Activated T-helper 1 cell treated with anti-CD3 and anti-CD28 coated beads, Interleukin-12 subunit alpha, Interleukin-12 subunit beta, Interleukin-2, Interleukin-4 antibody, amounts not matched to agents 30 ng/mL and 10 ng/mL and 1 ng/mL, durations not matched to agents 14 hours and 24 hours and 36 hours (primary cell): ENCODE measurements at regions of chr20 and their contacts with region 1.

Region 1: GRCh38 chr20:57619051-57619834 is 983 bp downstream of the ZBP1 start:
- DNase-seq: peak; percentile 71
- H3K4me3 Mint-ChIP-seq: peak overlapping the region; percentile 72
- H3K27ac Mint-ChIP-seq: peak overlapping the region; percentile 86
- H3K4me1 Mint-ChIP-seq: peaks cover 51% of the 10 kb centered on the region
- H3K27me3 Mint-ChIP-seq: peaks cover 17% of the 10 kb centered on the region

Region 2: DNA sequence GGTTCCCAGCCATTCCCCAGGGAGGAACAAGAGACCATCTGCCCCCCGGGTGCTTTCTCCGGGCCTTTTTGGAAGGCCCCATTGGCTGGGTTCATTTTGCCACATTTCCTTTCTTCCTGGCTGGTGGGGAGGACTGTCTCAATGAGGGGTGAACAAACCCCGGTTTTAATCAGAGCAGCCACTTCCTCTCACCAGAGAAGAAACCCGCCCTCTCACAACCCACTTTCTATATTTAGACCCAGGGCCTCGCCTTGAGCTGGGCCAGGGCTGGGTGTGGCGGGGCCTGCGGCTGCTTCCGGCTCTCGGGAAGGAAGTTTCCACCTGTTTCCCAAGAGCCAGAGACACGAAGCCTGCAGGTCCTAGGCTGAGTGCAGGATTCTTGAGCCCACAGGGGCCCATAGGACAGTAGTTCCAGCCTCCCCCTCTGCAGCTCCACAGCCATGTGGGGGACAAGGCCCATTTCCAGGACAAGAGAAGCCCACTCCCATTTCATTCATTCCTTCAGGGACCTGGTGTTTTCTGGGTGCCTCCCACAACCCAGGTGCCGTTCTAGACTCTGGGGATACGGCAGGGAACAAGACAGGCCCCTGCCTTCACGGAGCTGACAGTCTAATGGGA is 186.3 kb before region 1 on chr20:
- intact Hi-C with region 1: loop called (anchors 1 kb)
- DNase-seq: peak; percentile 72
- H3K4me3 Mint-ChIP-seq: peak overlapping the region; percentile 37
- H3K27ac Mint-ChIP-seq: peak overlapping the region; percentile 79
- H3K4me1 Mint-ChIP-seq: peaks cover 49% of the 10 kb centered on the region
- H3K27me3 Mint-ChIP-seq: peaks cover 3% of the 10 kb centered on the region

Region 3: GRCh38 chr20:57698117-57698866 is 79.0 kb after region 1 on chr20:
- intact Hi-C with region 1: loop called (anchors 1 kb)
- DNase-seq: peak; percentile 8
- H3K4me3 Mint-ChIP-seq: peak overlapping the region; percentile 35
- H3K27ac Mint-ChIP-seq: no peak overlapping the region
- H3K4me1 Mint-ChIP-seq: peaks cover 19% of the 10 kb centered on the region
- H3K27me3 Mint-ChIP-seq: peaks cover 12% of the 10 kb centered on the region

Region 4: DNA sequence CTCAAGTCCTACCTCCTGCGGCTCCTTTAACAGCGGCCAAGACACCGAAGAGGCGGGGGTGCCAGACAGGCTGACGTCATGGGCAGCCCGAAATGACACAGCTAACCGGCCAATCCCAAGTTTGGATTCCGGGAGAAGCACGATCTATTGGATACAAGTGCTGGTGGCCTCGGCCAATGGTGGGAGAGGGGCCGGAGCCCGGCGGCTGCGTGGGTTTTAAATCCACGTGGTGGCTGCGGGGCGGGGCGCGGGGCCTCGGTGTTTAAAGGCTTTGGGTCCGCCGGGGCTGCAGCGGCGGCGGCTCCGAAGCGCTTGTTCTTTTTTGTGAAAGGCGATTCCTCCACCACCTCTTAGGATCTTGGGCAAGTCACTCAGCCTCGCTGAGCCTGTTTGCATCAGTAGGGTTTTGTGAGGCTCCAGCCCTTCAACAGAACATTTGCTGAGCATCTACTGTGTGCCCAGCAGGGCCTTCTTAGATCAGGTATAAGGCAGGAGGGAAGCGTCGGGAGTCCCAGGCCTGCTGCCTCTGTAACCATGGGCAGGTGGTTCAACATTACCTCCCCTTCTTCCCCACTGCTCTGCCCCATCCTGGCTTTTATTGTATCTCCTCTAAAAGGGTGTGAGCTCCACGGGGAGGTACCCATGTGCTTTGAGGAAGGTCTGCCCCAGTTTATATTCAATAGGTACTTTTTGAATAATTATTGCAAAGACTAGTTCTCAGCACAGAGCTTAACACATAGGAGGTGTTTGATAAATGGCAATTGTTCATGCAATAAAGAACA is 99.4 kb after region 1 on chr20:
- intact Hi-C with region 1: loop called (anchors 1 kb)
- DNase-seq: peak; percentile 78
- H3K4me3 Mint-ChIP-seq: peak overlapping the region; percentile 22
- H3K27ac Mint-ChIP-seq: no peak overlapping the region
- H3K4me1 Mint-ChIP-seq: no peaks in the 10 kb centered on the region
- H3K27me3 Mint-ChIP-seq: peaks cover 23% of the 10 kb centered on the region

Region 5: GRCh38 chr20:58692594-58693226 is 1073.5 kb after region 1 on chr20 and contains the start of gene NPEPL1:
- intact Hi-C with region 1: no loop called
- DNase-seq: peak; percentile 62
- H3K4me3 Mint-ChIP-seq: peak within 1 kb of the TSS; percentile 82
- H3K27ac Mint-ChIP-seq: peak within 1 kb of the TSS; percentile 81
- H3K4me1 Mint-ChIP-seq: peaks cover 10% of the 10 kb centered on the region
- H3K27me3 Mint-ChIP-seq: no peaks in the 10 kb centered on the region
- total RNA-seq, gene NPEPL1: 20.6 and 22.9 TPM in 2 replicates

Region 6: GRCh38 chr20:59159493-59160376 is 1540.5 kb after region 1 on chr20:
- intact Hi-C with region 1: loop called (anchors 5 kb)
- DNase-seq: peak; percentile 52
- H3K4me3 Mint-ChIP-seq: peak overlapping the region; percentile 78
- H3K27ac Mint-ChIP-seq: peak overlapping the region; percentile 92
- H3K4me1 Mint-ChIP-seq: peaks cover 80% of the 10 kb centered on the region
- H3K27me3 Mint-ChIP-seq: no peaks in the 10 kb centered on the region